Natural killer cell (primary cell): ENCODE measurements at regions of chr5 and their contacts with region 1.

Region 1: GRCh38 chr5:176573564-176574296 is 24.6 kb downstream of the CDHR2 start:
- DNase-seq: peak; percentile 74 to 86
- ATAC-seq: peak; percentile 78 to 93 (median 92)
- H3K4me3 ChIP-seq: no peak overlapping the region
- H3K4me3 Mint-ChIP-seq: no peak overlapping the region
- H3K27ac ChIP-seq: no peak overlapping the region
- H3K27ac Mint-ChIP-seq: no peak overlapping the region
- H3K4me1 ChIP-seq: peaks cover 7% of the 10 kb centered on the region
- H3K4me1 Mint-ChIP-seq: peaks cover 0 to 12% of the 10 kb centered on the region in 2 donors
- H3K27me3 ChIP-seq: no peaks in the 10 kb centered on the region
- H3K27me3 Mint-ChIP-seq: peaks cover 0 to 10% of the 10 kb centered on the region in 2 donors
- CTCF ChIP-seq: peak; percentile 88

Region 2: DNA sequence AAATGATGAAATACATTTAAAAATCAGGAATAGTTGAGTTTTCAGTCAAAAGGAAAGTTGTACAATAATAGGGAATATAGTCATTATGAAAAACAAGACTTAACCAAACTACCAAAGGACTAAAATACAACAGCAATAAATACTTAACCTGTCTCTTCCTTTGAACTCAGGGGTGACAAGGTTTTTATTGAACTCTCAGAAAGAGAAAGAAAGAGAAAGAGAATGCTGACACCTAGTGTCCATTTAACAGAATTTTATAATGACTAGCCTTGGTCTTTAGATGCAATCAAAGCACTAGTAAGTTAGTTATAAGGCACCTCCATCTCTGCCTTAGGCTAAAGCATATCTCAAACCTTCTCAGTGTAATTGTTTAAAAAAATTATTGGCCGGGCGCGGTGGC is 385.3 kb after region 1 on chr5:
- intact Hi-C with region 1: loop called (anchors 2 kb)
- DNase-seq: peak in 1 of 2 donors; percentile 64
- ATAC-seq: peak in 2 of 3 donors; percentile 55 to 64
- H3K4me3 ChIP-seq: no peak overlapping the region
- H3K4me3 Mint-ChIP-seq: no peak overlapping the region
- H3K27ac ChIP-seq: no peak overlapping the region
- H3K27ac Mint-ChIP-seq: no peak overlapping the region
- H3K4me1 ChIP-seq: no peaks in the 10 kb centered on the region
- H3K4me1 Mint-ChIP-seq: peaks cover 4 to 5% of the 10 kb centered on the region in 2 donors
- H3K27me3 ChIP-seq: no peaks in the 10 kb centered on the region
- H3K27me3 Mint-ChIP-seq: no peaks in the 10 kb centered on the region
- CTCF ChIP-seq: peak; percentile 64